ENCODE measurements at regions of chr16 and their contacts with region 1.

Region 1: DNA sequence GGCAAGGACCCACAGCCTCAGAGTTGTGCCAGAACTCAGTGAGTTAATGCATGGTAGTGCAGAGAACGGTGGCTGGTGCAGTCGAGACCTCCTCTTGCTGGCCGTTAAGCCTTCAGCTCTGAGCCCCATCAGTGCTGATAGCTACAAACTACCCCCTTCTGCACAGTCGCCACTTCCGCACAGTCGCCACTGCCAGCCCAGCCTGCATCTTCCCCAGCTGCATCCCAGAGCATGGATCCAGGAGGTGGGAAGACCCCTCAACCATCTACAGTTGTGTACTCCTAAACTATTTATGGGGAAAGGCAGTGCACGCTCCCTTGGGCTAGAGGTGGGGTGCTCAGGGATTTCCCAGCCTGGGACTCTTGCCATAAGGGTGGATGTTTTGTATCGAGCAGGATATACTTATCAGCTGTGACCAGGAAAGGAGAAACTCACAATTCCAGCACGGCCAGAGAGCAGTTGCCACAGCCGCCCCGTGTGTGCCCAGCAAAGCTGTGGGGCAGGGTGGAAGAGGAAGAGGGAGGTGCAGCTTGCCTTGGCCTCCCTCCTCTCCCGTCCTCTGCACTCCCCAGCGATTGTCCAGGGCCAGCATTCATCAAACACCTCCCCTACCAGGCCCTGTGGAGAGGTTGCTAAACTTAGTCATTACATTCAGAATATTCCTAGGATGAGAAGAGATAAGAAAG is 49.5 kb upstream of the CMIP start:
- DNase-seq: no peak
- H3K4me3 ChIP-seq: no peak overlapping the region
- H3K27ac ChIP-seq: no peak overlapping the region
- H3K4me1 ChIP-seq: no peaks in the 10 kb centered on the region
- H3K27me3 ChIP-seq: no peaks in the 10 kb centered on the region
- CTCF ChIP-seq: no peak

Region 2: GRCh38 chr16:81313731-81314602 is 81.1 kb before region 1 on chr16:
- CTCF ChIA-PET with region 1: no interaction called
- dilution Hi-C with region 1: no loop called
- in situ Hi-C with region 1: no loop called
- intact Hi-C with region 1: no loop called
- DNase-seq: no peak
- H3K4me3 ChIP-seq: peak overlapping the region; percentile 63 to 89 (median 79)
- H3K27ac ChIP-seq: peak overlapping the region; percentile 32
- H3K4me1 ChIP-seq: peaks cover 23% of the 10 kb centered on the region
- H3K27me3 ChIP-seq: no peaks in the 10 kb centered on the region
- CTCF ChIP-seq: no peak

Region 3: GRCh38 chr16:81357711-81358260 is 37.3 kb before region 1 on chr16:
- CTCF ChIA-PET with region 1: no interaction called
- dilution Hi-C with region 1: no loop called
- in situ Hi-C with region 1: no loop called
- intact Hi-C with region 1: no loop called
- DNase-seq: no peak
- H3K4me3 ChIP-seq: no peak overlapping the region
- H3K27ac ChIP-seq: no peak overlapping the region
- H3K4me1 ChIP-seq: no peaks in the 10 kb centered on the region
- H3K27me3 ChIP-seq: no peaks in the 10 kb centered on the region
- CTCF ChIP-seq: no peak

Region 4: GRCh38 chr16:81415751-81416150 is 20.6 kb after region 1 on chr16:
- CTCF ChIA-PET with region 1: no interaction called
- dilution Hi-C with region 1: no loop called
- in situ Hi-C with region 1: no loop called
- intact Hi-C with region 1: no loop called
- DNase-seq: no peak
- H3K4me3 ChIP-seq: no peak overlapping the region
- H3K27ac ChIP-seq: no peak overlapping the region
- H3K4me1 ChIP-seq: no peaks in the 10 kb centered on the region
- H3K27me3 ChIP-seq: no peaks in the 10 kb centered on the region
- CTCF ChIP-seq: no peak

Region 5: DNA sequence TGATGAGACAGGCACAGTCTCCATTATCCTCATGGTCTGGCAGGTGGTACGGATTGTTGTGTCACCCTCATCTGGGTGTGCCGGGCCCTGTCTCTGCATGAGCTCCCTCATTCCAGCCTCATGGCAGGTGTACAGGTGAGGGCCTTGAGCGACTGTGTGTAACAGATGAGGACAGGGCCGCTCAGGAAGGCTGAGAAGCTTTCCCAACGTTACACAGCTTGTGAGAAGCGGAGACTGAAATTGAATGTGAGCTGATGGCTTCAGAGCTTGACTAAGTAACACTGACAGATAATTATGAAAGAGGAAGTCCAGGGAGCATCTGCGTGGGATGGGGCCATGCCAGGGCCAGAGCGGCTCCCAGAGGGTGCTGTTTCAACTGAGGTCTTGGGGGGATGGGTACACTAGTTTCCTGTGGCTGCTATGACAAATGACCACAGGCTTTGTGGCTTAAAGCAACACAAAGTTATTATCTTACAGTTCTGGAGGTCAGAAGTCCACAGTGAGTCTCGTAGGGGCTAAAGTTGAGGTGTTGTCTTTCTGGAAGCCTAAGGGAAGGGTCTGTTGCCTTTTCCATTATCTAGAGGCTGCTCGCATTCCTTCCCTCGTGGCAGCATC is 86.2 kb after region 1 on chr16:
- CTCF ChIA-PET with region 1: no interaction called
- dilution Hi-C with region 1: loop called (anchors 5 kb)
- in situ Hi-C with region 1: no loop called
- intact Hi-C with region 1: no loop called
- DNase-seq: no peak
- H3K4me3 ChIP-seq: no peak overlapping the region
- H3K27ac ChIP-seq: no peak overlapping the region
- H3K4me1 ChIP-seq: peaks cover 5% of the 10 kb centered on the region
- H3K27me3 ChIP-seq: no peaks in the 10 kb centered on the region
- CTCF ChIP-seq: no peak

Region 6: DNA sequence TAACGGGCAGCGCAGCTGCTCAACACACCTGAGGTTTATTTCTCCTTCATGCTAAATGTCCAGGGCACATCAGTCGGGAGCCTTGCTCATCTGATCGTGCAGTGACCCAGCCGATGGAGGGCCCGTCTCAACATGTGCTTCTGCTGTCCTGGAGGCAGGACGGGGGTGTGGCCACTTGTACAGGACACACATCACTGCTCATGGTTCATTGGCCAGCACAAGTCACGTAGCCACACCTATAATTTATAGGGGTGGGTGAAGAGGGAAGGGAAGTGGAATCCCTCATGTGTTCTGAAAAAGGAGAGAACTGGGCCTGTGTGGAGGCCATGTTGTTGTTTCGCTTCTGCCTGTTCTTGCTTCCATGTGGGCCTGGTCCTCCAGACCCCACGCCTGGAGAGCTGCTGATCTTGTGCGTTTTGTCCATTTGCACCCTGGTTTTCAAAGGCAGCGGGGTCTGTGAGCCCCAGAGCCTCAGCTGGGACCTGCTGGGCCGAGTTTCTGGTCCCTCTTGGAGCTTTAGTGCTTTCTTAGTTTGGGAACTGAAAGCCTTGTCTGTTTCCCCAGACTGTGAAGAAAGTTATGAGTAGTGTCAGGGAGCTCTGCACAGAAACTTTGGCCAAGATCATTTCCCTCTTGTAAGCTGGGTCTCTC is 110.0 kb after region 1 on chr16:
- CTCF ChIA-PET with region 1: no interaction called
- dilution Hi-C with region 1: no loop called
- in situ Hi-C with region 1: no loop called
- intact Hi-C with region 1: no loop called
- DNase-seq: peak; percentile 86
- H3K4me3 ChIP-seq: no peak overlapping the region
- H3K27ac ChIP-seq: peak overlapping the region; percentile 80
- H3K4me1 ChIP-seq: peaks cover 43% of the 10 kb centered on the region
- H3K27me3 ChIP-seq: no peaks in the 10 kb centered on the region
- CTCF ChIP-seq: no peak

Region 7: GRCh38 chr16:81703177-81704155 is 308.4 kb after region 1 on chr16:
- CTCF ChIA-PET with region 1: no interaction called
- dilution Hi-C with region 1: loop called (anchors 10 kb)
- in situ Hi-C with region 1: loop called in 1 of 2 experiments (anchors 10 kb)
- intact Hi-C with region 1: no loop called
- DNase-seq: peak; percentile 59
- H3K4me3 ChIP-seq: no peak overlapping the region
- H3K27ac ChIP-seq: no peak overlapping the region
- H3K4me1 ChIP-seq: peaks cover 13% of the 10 kb centered on the region
- H3K27me3 ChIP-seq: no peaks in the 10 kb centered on the region
- CTCF ChIP-seq: no peak